ENCODE measurements at regions of chr1 and their contacts with region 1.

Region 1: GRCh38 chr1:77538956-77539518 is 143.4 kb downstream of the ZZZ3 start:
- DNase-seq: peak; percentile 65
- H3K4me3 ChIP-seq: no peak overlapping the region
- CTCF ChIP-seq: no peak

Region 2: DNA sequence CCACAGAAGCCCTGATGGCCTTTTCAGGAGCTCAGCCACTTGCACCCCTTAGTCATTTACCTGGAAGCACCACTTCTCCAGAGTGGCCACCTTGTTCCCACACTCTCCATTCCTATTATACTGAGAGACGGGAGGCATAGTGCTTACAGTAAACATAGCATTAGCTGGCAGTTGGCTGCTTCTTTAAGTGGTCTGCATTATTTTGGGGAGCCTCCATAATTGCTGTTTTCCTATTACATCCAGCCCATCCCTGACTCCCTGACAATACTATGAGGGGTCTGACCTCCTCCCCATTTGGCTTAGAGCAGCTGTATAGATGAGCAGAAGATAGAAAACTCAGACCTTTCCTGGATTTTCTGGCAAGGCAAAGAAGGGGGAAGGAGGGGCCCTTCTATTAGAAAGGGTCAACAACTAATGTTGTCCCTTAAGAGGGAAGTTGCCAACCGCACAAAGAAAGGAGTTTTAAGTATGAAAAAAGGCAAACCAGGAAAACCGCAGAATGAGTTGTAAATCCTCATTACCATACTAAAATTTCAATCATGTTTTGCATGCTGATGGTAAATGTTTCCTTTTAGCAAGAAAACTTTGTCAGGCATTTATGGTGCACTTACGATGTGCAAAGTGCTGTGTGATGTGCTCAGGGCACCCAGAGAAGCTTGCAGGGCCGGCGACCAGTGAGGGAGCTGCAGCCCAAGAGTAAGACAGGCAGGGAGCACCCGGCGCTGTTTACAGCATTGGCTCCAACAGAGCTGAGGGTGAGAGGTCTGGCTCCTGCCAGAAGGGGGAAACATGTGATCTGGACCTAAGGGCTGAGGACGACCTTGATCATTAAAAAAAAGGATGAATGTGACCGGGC is 23.9 kb before region 1 on chr1:
- CTCF ChIA-PET with region 1: interaction called, 27 read pairs
- POLR2A ChIA-PET with region 1: interaction called, 16 read pairs
- DNase-seq: peak; percentile 46
- H3K4me3 ChIP-seq: peak overlapping the region; percentile 10; the same call in 1 of the 2 replicates
- CTCF ChIP-seq: peak; percentile 33

Region 3: GRCh38 chr1:77683160-77684148 is 144.4 kb after region 1 on chr1:
- CTCF ChIA-PET with region 1: interaction called, 20 read pairs
- POLR2A ChIA-PET with region 1: interaction called, 3 read pairs
- DNase-seq: no peak
- H3K4me3 ChIP-seq: peak overlapping the region; percentile 89
- CTCF ChIP-seq: peak; percentile 80

Region 4: DNA sequence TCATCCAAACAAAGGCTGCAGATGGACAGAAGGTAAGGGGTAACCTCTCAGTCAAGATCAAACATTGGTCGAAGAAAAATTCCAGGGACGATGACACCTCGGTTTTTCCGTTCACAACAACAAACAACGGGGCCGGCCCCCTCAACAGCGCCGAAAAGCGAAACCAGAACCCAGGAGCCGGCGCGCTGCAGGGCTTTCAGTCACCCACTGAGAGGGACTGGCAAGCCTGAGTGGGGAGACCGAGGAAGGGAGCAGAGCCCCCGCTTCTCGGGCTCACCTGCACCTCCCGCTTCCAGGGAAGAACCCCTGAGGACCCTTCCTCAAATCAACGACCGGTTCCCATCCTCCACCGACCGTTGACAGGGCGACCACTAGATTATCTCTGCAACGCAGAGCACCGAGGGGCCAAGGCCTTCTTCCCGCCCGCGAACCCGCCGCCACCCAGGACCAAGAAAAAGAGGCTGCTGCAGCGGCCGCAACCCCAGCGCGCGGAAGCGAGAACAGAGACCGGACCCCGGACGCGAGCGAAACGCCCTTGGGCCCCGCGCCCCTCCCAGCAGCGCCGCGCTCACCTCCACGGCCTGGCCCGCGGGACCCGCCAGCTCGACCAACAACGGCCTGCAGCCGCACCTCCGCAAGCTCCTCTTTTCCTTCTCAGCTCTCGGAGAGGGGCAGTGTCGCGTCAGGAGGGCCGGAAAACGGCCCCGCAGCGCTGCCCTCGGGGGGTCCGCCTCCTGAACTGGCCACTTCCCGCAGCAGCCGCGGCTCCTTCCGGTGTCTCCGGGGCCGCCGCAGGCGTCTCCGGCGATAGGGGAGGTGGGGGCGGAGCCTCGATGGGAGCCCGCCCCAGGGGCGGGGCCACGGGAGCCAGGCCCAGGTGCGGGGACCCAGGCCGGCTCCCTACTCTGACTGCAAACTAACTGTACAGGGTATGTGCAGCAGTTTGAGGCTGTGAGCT is 220.3 kb after region 1 on chr1 and contains the start of gene USP33:
- CTCF ChIA-PET with region 1: no interaction called
- POLR2A ChIA-PET with region 1: no interaction called
- DNase-seq: no peak
- H3K4me3 ChIP-seq: peak within 1 kb of the TSS; percentile 93
- CTCF ChIP-seq: no peak